Endothelial cell of umbilical vein (primary cell): ENCODE measurements at regions of chr1 and their contacts with region 1.

Region 1: DNA sequence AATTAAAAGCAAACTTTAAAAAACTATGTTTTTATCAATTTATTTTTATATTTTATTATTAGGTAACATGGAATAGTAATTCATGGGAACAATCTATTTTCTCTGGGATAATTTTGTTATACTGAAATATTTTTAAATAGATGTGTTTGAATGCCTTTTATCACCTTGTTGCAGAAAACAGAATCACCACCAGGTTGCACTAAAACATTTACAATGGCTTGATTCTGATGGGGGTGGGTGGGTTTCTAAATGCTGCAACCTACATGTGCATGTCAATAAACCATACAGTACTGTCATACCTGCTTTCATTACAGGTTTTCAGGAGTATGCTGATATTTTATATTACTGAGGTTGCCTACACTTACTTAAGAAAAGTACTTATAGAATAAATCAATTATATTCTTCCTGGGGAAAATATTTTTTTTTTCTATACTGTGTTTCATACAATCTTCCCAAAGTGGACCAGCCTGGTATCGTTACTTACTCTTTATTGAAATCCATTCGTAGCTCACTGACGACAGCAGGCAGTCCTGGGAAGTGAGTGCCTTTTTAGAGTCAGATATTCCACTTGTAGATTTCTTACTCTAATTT is 132.8 kb downstream of the PTPRC start:
- DNase-seq: peak; percentile 82
- H3K4me3 ChIP-seq: no peak overlapping the region
- H3K27ac ChIP-seq: no peak overlapping the region
- H3K4me1 ChIP-seq: peaks cover 11% of the 10 kb centered on the region
- H3K27me3 ChIP-seq: no peaks in the 10 kb centered on the region
- CTCF ChIP-seq: peak; percentile 45 to 46
- POLR2A ChIP-seq: no peak

Region 2: GRCh38 chr1:198620951-198621824 is 150.5 kb before region 1 on chr1:
- CTCF ChIA-PET with region 1: no interaction called
- POLR2A ChIA-PET with region 1: no interaction called
- dilution Hi-C with region 1: no loop called
- intact Hi-C with region 1: no loop called
- DNase-seq: no peak
- H3K4me3 ChIP-seq: no peak overlapping the region
- H3K27ac ChIP-seq: no peak overlapping the region
- H3K4me1 ChIP-seq: no peaks in the 10 kb centered on the region
- H3K27me3 ChIP-seq: no peaks in the 10 kb centered on the region
- CTCF ChIP-seq: no peak
- POLR2A ChIP-seq: no peak

Region 3: GRCh38 chr1:198829944-198830343 is 58.3 kb after region 1 on chr1:
- CTCF ChIA-PET with region 1: no interaction called
- POLR2A ChIA-PET with region 1: no interaction called
- dilution Hi-C with region 1: no loop called
- intact Hi-C with region 1: loop called (anchors 2 kb)
- DNase-seq: peak; percentile 66
- H3K4me3 ChIP-seq: no peak overlapping the region
- H3K27ac ChIP-seq: no peak overlapping the region
- H3K4me1 ChIP-seq: peaks cover 13% of the 10 kb centered on the region
- H3K27me3 ChIP-seq: no peaks in the 10 kb centered on the region
- CTCF ChIP-seq: peak in 1 of 2 donors; percentile 25
- POLR2A ChIP-seq: no peak

Region 4: DNA sequence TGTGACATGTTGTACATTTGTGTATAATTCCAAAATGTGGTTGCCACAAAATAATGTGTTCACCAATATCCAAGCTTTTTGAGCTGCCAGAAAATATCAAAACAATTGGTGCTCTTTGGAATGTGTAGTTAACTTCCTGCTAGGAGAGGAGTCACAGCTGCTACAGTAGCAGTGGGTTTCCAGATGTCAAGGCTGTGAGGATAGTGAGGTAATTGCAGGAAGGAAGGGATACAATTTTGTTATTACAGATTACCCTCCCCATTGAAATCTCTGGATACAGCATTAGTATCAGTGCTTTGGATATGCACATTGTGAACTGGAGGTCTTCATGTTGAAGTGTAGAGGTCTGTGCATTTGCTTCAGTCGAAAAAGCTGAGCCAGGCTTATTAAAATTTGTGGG is 120.4 kb after region 1 on chr1:
- CTCF ChIA-PET with region 1: interaction called, 3 read pairs
- POLR2A ChIA-PET with region 1: no interaction called
- dilution Hi-C with region 1: no loop called
- intact Hi-C with region 1: loop called (anchors 1 kb)
- DNase-seq: peak; percentile 87
- H3K4me3 ChIP-seq: no peak overlapping the region
- H3K27ac ChIP-seq: peak overlapping the region; percentile 74
- H3K4me1 ChIP-seq: peaks cover 44% of the 10 kb centered on the region
- H3K27me3 ChIP-seq: no peaks in the 10 kb centered on the region
- CTCF ChIP-seq: no peak
- POLR2A ChIP-seq: no peak

Region 5: GRCh38 chr1:199243423-199244061 is 471.9 kb after region 1 on chr1:
- CTCF ChIA-PET with region 1: interaction called, 5 read pairs
- POLR2A ChIA-PET with region 1: no interaction called
- dilution Hi-C with region 1: no loop called
- intact Hi-C with region 1: loop called (anchors 1 kb)
- DNase-seq: peak; percentile 58
- H3K4me3 ChIP-seq: no peak overlapping the region
- H3K27ac ChIP-seq: no peak overlapping the region
- H3K4me1 ChIP-seq: no peaks in the 10 kb centered on the region
- H3K27me3 ChIP-seq: no peaks in the 10 kb centered on the region
- CTCF ChIP-seq: peak; percentile 67 to 87
- POLR2A ChIP-seq: no peak

Region 6: DNA sequence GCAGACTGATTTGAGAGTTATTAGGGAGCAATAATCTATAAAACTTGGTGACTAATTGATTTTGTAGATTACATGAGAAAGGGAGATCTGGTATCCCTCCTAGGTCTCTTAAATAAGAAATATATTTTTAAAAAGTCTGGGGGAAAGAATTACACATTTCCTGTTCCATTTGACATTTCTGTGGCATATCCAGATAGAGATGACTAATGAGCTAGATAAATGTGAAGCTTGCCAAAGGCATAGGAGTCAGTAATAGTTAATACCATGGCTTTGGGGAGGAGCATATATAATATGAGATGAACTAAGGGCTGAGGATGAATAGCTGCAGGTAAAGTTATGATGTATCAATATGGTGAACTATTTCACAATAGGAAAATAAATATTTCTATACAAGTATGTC is 530.9 kb after region 1 on chr1:
- CTCF ChIA-PET with region 1: no interaction called
- POLR2A ChIA-PET with region 1: no interaction called
- dilution Hi-C with region 1: no loop called
- intact Hi-C with region 1: loop called (anchors 5 kb)
- DNase-seq: peak; percentile 85
- H3K4me3 ChIP-seq: no peak overlapping the region
- H3K27ac ChIP-seq: peak overlapping the region; percentile 61
- H3K4me1 ChIP-seq: peaks cover 37% of the 10 kb centered on the region
- H3K27me3 ChIP-seq: no peaks in the 10 kb centered on the region
- CTCF ChIP-seq: no peak
- POLR2A ChIP-seq: no peak

Region 7: GRCh38 chr1:199463521-199464128 is 692.0 kb after region 1 on chr1:
- CTCF ChIA-PET with region 1: interaction called, 26 read pairs
- POLR2A ChIA-PET with region 1: no interaction called
- dilution Hi-C with region 1: no loop called
- intact Hi-C with region 1: loop called (anchors 1 kb)
- DNase-seq: peak; percentile 71
- H3K4me3 ChIP-seq: no peak overlapping the region
- H3K27ac ChIP-seq: no peak overlapping the region
- H3K4me1 ChIP-seq: peaks cover 5% of the 10 kb centered on the region
- H3K27me3 ChIP-seq: no peaks in the 10 kb centered on the region
- CTCF ChIP-seq: peak; percentile 67 to 68
- POLR2A ChIP-seq: no peak